ENCODE measurements at regions of chr14 and their contacts with region 1.

Region 1: GRCh38 chr14:73886449-73887317 is at the start of gene ZNF410:
- DNase-seq: peak; percentile 97
- ATAC-seq: peak; percentile 100
- H3K4me3 Mint-ChIP-seq: peak within 1 kb of the TSS; percentile 80
- H3K27ac Mint-ChIP-seq: peak within 1 kb of the TSS; percentile 99
- H3K4me1 Mint-ChIP-seq: peaks cover 43% of the 10 kb centered on the region
- H3K27me3 Mint-ChIP-seq: no peaks in the 10 kb centered on the region
- total RNA-seq, gene ZNF410: 58.6 to 66.2 TPM

Region 2: DNA sequence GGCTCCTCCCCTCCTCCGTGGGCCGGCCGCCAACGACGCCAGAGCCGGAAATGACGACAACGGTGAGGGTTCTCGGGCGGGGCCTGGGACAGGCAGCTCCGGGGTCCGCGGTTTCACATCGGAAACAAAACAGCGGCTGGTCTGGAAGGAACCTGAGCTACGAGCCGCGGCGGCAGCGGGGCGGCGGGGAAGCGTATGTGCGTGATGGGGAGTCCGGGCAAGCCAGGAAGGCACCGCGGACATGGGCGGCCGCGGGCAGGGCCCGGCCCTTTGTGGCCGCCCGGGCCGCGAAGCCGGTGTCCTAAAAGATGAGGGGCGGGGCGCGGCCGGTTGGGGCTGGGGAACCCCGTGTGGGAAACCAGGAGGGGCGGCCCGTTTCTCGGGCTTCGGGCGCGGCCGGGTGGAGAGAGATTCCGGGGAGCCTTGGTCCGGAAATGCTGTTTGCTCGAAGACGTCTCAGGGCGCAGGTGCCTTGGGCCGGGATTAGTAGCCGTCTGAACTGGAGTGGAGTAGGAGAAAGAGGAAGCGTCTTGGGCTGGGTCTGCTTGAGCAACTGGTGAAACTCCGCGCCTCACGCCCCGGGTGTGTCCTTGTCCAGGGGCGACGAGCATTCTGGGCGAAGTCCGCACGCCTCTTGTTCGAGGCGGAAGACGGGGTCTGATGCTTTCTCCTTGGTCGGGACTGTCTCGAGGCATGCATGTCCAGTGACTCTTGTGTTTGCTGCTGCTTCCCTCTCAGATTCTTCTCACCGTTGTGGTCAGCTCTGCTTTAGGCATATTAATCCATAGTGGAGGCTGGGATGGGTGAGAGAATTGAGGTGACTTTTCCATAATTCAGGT is 750.1 kb before region 1 on chr14 and contains the start of gene PSEN1:
- CTCF ChIA-PET with region 1: no interaction called
- POLR2A ChIA-PET with region 1: no interaction called
- intact Hi-C with region 1: loop called in 1 of 2 experiments (anchors 1 kb)
- DNase-seq: peak; percentile 99
- ATAC-seq: peak; percentile 95
- H3K4me3 Mint-ChIP-seq: peak within 1 kb of the TSS; percentile 86
- H3K27ac Mint-ChIP-seq: peak within 1 kb of the TSS; percentile 82
- H3K4me1 Mint-ChIP-seq: peaks cover 31% of the 10 kb centered on the region
- H3K27me3 Mint-ChIP-seq: no peaks in the 10 kb centered on the region
- total RNA-seq, gene PSEN1: 31.2 to 31.6 TPM

Region 3: GRCh38 chr14:73644531-73645247 is 242.0 kb before region 1 on chr14 and contains the start of gene DNAL1:
- CTCF ChIA-PET with region 1: no interaction called
- POLR2A ChIA-PET with region 1: interaction called, 3 read pairs
- intact Hi-C with region 1: loop called in 1 of 2 experiments (anchors 1 kb)
- DNase-seq: peak; percentile 95
- ATAC-seq: peak; percentile 100
- H3K4me3 Mint-ChIP-seq: peak within 1 kb of the TSS; percentile 98
- H3K27ac Mint-ChIP-seq: peak within 1 kb of the TSS; percentile 91
- H3K4me1 Mint-ChIP-seq: peaks cover 16% of the 10 kb centered on the region
- H3K27me3 Mint-ChIP-seq: no peaks in the 10 kb centered on the region
- total RNA-seq, gene DNAL1: 3.7 to 6.8 TPM

Region 4: GRCh38 chr14:73741386-73741875 is 145.3 kb before region 1 on chr14:
- CTCF ChIA-PET with region 1: no interaction called
- POLR2A ChIA-PET with region 1: no interaction called
- intact Hi-C with region 1: loop called in 1 of 2 experiments (anchors 5 kb)
- DNase-seq: peak; percentile 85
- ATAC-seq: peak; percentile 80
- H3K4me3 Mint-ChIP-seq: peak overlapping the region; percentile 66
- H3K27ac Mint-ChIP-seq: peak overlapping the region; percentile 82
- H3K4me1 Mint-ChIP-seq: peaks cover 65% of the 10 kb centered on the region
- H3K27me3 Mint-ChIP-seq: no peaks in the 10 kb centered on the region

Region 5: DNA sequence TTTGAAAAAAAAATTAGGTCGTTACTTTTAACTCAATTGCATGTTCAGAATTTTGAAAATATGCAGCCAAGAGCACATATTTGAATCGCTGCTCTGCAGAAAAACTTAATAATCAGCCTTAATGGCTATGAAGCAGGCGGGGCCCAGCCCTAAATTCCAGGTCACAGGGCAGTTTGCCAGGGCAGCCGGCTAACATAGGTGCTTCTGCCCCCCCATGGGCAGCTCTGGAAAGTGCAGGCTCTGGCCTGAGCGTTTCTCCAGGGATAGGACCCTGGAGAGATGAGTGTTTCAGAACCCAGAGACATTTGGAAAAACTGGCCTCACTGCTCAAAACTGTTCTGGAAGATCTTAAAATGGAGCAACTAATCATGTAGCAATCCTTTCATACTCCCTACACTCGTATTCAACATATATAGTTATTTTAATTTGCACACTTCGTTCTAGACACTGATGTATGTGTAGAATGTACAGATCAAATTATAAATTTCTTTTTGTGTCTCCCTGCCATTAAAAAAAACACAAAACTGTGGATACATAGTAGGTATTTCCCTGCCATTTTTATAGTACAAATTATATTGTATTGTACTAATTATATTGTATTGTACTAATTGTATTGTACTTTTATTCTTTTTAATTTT is 61.0 kb before region 1 on chr14:
- CTCF ChIA-PET with region 1: interaction called, 3 read pairs
- POLR2A ChIA-PET with region 1: no interaction called
- intact Hi-C with region 1: loop called in 1 of 2 experiments (anchors 2 kb)
- DNase-seq: peak; percentile 91
- ATAC-seq: peak; percentile 79
- H3K4me3 Mint-ChIP-seq: no peak overlapping the region
- H3K27ac Mint-ChIP-seq: no peak overlapping the region
- H3K4me1 Mint-ChIP-seq: peaks cover 18% of the 10 kb centered on the region
- H3K27me3 Mint-ChIP-seq: no peaks in the 10 kb centered on the region

Region 6: DNA sequence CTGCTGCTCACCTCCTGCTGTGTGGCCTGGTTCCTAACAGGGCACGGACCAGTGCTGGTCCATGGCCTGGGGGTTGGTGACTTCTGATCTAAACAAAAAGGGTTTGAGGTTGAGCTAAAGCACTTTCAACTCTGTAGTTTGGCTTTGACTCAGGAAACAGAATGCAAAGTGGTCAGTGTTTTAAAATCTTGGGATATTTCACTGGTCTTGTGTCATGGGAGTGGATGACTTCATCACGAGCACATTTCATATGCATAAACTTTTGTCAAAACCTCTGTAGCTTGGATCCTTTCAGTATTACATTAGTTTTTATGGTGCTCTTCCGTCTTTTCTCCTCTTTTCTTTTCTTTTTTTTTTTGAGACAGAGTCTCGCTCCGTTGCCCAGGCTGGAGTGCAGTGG is 37.7 kb after region 1 on chr14:
- CTCF ChIA-PET with region 1: no interaction called
- POLR2A ChIA-PET with region 1: no interaction called
- intact Hi-C with region 1: no loop called
- DNase-seq: no peak
- ATAC-seq: no peak
- H3K4me3 Mint-ChIP-seq: no peak overlapping the region
- H3K27ac Mint-ChIP-seq: no peak overlapping the region
- H3K4me1 Mint-ChIP-seq: no peaks in the 10 kb centered on the region
- H3K27me3 Mint-ChIP-seq: no peaks in the 10 kb centered on the region

Region 7: GRCh38 chr14:74018586-74019407 is 132.1 kb after region 1 on chr14 and contains the starts of genes BBOF1 and ENTPD5:
- CTCF ChIA-PET with region 1: no interaction called
- POLR2A ChIA-PET with region 1: no interaction called
- intact Hi-C with region 1: loop called (anchors 1 to 2 kb)
- DNase-seq: peak; percentile 90
- ATAC-seq: peak; percentile 93
- H3K4me3 Mint-ChIP-seq: peak within 1 kb of the TSS; percentile 80
- H3K27ac Mint-ChIP-seq: peak within 1 kb of the TSS; percentile 93
- H3K4me1 Mint-ChIP-seq: peaks cover 12% of the 10 kb centered on the region
- H3K27me3 Mint-ChIP-seq: no peaks in the 10 kb centered on the region
- total RNA-seq, gene BBOF1: 1.9 to 2.1 TPM
- total RNA-seq, gene ENTPD5: 8.7 to 10.0 TPM